ENCODE measurements at regions of chr6 and their contacts with region 1.

Region 1: DNA sequence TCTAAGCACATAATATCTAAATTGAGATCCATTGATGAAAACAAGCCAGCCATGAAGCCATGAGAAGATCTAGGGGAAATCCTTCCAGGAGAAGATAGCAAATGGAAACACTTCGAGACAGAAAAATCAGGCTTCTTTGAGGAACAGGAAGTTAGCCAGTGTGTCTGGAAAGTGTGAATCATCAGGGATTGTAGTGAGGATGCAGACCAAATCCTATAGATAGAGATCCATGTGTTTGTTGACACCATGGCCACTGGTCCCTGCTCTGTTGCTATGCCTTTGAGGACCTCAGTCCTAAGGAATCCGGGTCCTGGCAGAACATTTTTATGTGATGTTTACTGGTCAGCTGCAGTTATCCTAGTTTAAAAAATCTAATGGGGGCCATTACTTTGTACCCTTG is 6.6 kb upstream of the ELOVL2 start:
- DNase-seq: no peak
- ATAC-seq: no peak
- H3K4me3 ChIP-seq: no peak overlapping the region
- H3K27ac ChIP-seq: no peak overlapping the region
- H3K4me1 ChIP-seq: peaks cover 15% of the 10 kb centered on the region
- H3K27me3 ChIP-seq: no peaks in the 10 kb centered on the region
- CTCF ChIP-seq: no peak
- POLR2A ChIP-seq: no peak

Region 2: DNA sequence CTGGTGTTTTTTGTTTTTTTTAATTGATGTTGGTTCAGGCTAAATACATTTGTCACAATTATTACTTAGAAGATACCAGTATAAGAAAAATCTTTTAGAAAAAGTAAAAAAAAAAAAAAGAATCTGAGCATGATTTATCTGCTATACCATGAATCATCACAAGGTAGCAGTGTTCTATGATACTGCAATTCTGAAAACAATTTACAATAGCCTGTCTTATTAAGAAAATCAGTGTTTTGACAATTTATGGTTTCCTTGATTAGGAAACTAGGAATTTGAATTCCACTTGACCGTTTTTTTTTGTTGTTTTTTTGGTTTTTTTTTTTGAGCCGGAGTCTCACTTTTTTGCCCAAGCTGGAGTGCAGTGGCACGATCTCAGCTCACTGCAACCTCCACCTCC is 203.0 kb before region 1 on chr6:
- intact Hi-C with region 1: loop called (anchors 10 kb)
- DNase-seq: no peak
- ATAC-seq: no peak
- H3K4me3 ChIP-seq: no peak overlapping the region
- H3K27ac ChIP-seq: no peak overlapping the region
- H3K4me1 ChIP-seq: no peaks in the 10 kb centered on the region
- H3K27me3 ChIP-seq: no peaks in the 10 kb centered on the region
- CTCF ChIP-seq: peak in 4 of 7 experiments; percentile 8 to 36 (median 18)
- POLR2A ChIP-seq: no peak

Region 3: DNA sequence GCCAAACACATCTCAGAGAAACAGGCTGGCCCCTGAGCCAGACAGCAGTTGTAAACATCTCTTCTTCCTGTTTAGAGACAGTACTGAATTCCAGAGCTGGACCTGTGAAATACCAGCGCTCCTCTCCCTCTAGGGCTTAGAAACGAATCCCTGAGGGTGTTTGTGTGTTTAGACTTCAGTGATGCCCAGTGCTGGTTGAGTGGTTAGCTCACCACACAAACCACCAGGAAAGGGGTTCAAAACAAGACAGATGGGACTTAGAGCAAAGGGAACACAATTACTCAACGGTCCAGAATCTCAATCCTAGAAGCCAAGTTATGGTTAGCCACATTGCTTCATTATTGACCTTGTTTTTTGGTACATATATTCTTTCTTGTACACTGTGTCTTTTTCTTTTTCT is 378.2 kb after region 1 on chr6:
- intact Hi-C with region 1: no loop called
- DNase-seq: peak in 1 of 4 donors; percentile 18
- ATAC-seq: peak; percentile 22
- H3K4me3 ChIP-seq: no peak overlapping the region
- H3K27ac ChIP-seq: peak overlapping the region in 1 of 4 donors; percentile 41
- H3K4me1 ChIP-seq: peaks cover 2% of the 10 kb centered on the region
- H3K27me3 ChIP-seq: no peaks in the 10 kb centered on the region
- CTCF ChIP-seq: no peak
- POLR2A ChIP-seq: no peak

Measured in body of pancreas (tissue), 4 donors.